Endothelial cell of umbilical vein (primary cell): ENCODE measurements at regions of chr3 and their contacts with region 1.

Region 1: DNA sequence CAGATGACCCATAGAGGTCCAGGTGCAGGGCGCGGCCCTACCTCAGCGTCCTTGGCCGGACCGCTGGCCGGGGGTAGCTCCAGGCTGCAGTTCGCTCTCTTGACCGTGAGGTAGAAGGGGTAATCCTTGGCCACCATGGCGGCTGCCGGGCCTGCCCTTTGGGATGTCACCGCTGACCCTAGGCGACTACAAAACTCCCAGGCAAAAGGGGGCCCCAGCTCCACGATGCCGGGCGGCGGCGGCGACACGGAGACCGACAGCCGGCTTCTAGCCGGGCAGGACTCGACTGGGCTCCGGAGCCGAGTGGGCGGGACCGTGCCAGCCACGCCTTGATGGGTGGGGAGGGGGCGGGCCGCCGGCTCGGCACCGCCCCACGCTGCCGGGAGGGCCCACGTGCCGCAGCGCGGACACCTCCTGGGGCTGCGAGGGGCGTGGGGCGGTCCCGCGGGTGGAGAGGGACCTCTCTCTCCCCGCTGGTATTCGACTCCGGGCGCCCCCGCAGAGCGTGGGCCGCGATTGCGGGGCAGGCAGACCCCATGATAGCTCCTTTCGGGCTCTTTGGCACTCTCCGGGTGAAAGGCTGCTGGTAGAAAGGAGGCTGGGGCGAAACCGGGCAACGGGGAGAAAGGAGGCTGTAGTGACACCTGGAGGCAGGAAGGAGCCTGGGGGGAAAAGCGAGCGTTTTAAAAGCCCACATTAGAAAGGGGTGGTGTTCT is at the start of gene ARHGEF3:
- DNase-seq: peak; percentile 90
- H3K4me3 ChIP-seq: peak within 1 kb of the TSS; percentile 56 to 82 (median 68)
- H3K27ac ChIP-seq: peak within 1 kb of the TSS; percentile 7
- H3K4me1 ChIP-seq: peaks cover 27% of the 10 kb centered on the region
- H3K27me3 ChIP-seq: no peaks in the 10 kb centered on the region
- CTCF ChIP-seq: peak; percentile 32 to 54
- POLR2A ChIP-seq: peak; percentile 90
- total RNA-seq, gene ARHGEF3: 11.5 and 16.3 TPM in 2 replicates

Region 2: GRCh38 chr3:56702490-56703315 is 99.1 kb before region 1 on chr3:
- CTCF ChIA-PET with region 1: interaction called, 249 read pairs
- POLR2A ChIA-PET with region 1: no interaction called
- dilution Hi-C with region 1: no loop called
- intact Hi-C with region 1: loop called (anchors 1 kb)
- DNase-seq: peak; percentile 66
- H3K4me3 ChIP-seq: no peak overlapping the region
- H3K27ac ChIP-seq: no peak overlapping the region
- H3K4me1 ChIP-seq: no peaks in the 10 kb centered on the region
- H3K27me3 ChIP-seq: no peaks in the 10 kb centered on the region
- CTCF ChIP-seq: peak; percentile 56 to 61
- POLR2A ChIP-seq: no peak

Region 3: DNA sequence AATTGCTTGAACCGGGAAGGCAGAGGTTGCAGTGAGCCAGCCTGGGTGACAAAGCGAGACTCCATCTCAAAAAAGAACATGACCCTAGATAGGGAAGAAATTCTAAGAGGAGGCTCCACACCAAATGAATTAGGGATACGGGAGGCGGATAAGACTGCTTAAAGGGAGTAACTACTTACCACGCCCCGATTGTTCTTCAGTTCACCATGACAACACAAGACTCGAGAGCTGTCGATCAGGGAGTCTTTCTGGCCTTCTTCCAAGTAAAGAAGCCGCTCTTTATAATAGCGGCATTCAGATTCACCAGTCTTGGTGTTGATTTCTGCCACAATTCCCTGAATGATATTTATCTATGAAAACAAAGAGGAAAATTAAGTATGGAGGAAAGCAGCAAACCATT is 64.8 kb before region 1 on chr3:
- CTCF ChIA-PET with region 1: interaction called, 10 read pairs
- POLR2A ChIA-PET with region 1: no interaction called
- dilution Hi-C with region 1: no loop called
- intact Hi-C with region 1: no loop called
- DNase-seq: no peak
- H3K4me3 ChIP-seq: no peak overlapping the region
- H3K27ac ChIP-seq: no peak overlapping the region
- H3K4me1 ChIP-seq: no peaks in the 10 kb centered on the region
- H3K27me3 ChIP-seq: no peaks in the 10 kb centered on the region
- CTCF ChIP-seq: no peak
- POLR2A ChIP-seq: no peak

Region 4: DNA sequence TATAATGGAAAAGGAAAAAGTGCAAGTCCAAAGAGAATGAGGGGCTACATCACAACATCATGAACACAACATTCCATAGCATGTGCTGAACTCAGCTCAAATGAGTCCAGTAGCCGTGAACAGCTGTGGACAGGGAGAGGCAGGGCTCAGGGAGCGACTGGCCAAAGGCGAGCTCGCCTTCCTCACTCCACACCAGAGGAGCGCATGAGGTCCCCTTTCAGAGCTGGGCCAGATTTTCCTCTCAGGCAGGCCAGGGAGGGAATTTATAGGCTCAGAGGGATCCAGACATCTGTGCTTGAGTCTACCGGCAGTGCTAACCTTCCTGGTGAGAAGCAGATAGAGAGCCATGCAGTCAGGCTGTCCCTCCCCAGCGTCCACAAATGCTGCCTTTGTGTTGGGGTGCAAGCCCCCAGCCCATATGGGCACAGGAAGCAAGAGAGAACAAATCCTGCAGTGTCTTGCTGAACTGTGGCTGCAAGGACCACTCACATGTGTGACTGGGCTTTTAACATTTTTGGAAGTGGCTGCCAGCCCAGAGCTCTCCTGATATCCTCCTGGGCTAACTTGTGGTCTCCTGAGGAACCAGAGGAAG is 32.6 kb before region 1 on chr3:
- CTCF ChIA-PET with region 1: interaction called, 15 read pairs
- POLR2A ChIA-PET with region 1: no interaction called
- dilution Hi-C with region 1: no loop called
- intact Hi-C with region 1: no loop called
- DNase-seq: no peak
- H3K4me3 ChIP-seq: no peak overlapping the region
- H3K27ac ChIP-seq: no peak overlapping the region
- H3K4me1 ChIP-seq: no peaks in the 10 kb centered on the region
- H3K27me3 ChIP-seq: no peaks in the 10 kb centered on the region
- CTCF ChIP-seq: no peak
- POLR2A ChIP-seq: no peak

Region 5: DNA sequence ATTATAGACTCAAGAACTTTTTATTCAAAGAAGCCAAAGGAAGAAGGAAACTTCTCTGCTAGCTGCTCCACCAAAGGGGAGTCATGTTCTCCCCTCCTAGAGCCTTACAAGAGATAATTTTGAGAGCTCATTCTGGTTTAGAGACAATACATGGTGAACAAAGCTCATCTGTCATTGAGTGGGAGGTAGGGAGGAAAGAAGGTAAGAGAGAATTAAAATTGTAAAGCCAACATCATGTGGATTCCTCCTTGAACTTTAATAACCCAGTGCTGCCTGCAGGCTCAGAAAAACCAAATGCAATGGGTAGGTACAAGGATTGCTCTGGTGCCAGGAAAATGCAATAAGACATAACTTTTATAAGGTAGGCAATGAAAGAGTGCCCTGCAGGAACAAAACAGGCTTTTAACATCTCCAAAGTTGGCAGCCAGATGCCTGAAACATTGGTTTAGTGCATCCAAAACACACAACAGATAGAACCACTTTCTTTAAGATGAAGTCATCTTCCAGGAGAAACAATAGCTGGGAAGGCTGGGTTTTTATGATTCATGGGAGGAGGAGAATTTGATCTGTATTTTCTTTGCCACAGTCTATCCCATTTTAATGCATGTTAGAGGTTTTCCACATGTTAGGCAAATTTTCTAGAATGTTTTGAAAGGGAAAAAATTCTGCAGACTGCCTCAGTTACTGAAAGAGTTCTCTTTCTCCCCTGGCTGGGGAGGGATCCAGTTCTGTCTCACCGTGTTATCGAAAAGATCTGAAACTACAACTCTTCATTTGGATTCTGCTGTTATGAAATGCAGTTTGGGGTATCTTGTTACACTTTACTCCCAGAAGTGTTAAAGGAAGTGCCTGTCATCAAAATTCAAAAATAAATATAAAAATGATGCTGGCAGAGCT is 11.2 kb after region 1 on chr3:
- CTCF ChIA-PET with region 1: interaction called, 46 read pairs
- POLR2A ChIA-PET with region 1: interaction called, 4 read pairs
- dilution Hi-C with region 1: no loop called
- intact Hi-C with region 1: no loop called
- DNase-seq: peak; percentile 71
- H3K4me3 ChIP-seq: peak overlapping the region in 1 of 3 experiments; percentile 33
- H3K27ac ChIP-seq: peak overlapping the region; percentile 65
- H3K4me1 ChIP-seq: peaks cover 14% of the 10 kb centered on the region
- H3K27me3 ChIP-seq: no peaks in the 10 kb centered on the region
- CTCF ChIP-seq: no peak
- POLR2A ChIP-seq: no peak

Region 6: GRCh38 chr3:56862352-56863074 is 60.7 kb after region 1 on chr3:
- CTCF ChIA-PET with region 1: interaction called, 10 read pairs
- POLR2A ChIA-PET with region 1: no interaction called
- dilution Hi-C with region 1: no loop called
- intact Hi-C with region 1: no loop called
- DNase-seq: peak; percentile 76
- H3K4me3 ChIP-seq: no peak overlapping the region
- H3K27ac ChIP-seq: no peak overlapping the region
- H3K4me1 ChIP-seq: peaks cover 7% of the 10 kb centered on the region
- H3K27me3 ChIP-seq: no peaks in the 10 kb centered on the region
- CTCF ChIP-seq: no peak
- POLR2A ChIP-seq: no peak

Region 7: DNA sequence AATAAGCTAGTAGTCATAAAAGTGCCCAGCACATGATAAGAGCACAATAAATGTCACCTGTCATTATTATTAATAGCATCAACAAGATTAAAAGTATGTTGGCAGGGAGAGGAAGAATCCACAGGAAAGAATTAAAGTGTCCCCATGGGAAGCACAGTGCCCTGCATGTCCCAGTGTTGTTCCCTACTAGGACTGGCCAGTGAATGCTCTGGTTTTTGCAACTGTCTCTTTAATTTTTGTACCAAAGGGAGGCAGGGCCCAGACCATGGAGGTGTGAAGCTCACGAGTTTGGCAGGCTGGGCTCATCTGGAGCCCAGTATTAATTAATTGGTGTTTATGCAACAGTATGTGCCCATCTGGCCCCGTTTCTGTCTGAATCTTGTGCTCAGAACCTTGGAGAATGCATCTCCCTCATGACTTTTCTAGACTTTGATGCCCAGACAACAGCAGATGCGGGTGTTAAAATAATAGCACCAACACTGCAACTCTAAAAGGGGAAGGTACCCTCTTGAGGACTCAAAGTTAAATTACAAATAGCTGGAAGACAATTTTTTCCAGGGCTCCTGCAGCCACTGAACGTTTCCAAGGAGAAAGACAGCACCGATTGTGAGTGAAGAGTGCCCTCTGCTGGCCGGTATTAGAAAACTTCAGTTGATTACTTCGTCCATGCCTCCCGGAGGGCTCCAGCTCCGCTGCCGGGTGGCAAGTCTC is 186.8 kb after region 1 on chr3:
- CTCF ChIA-PET with region 1: interaction called, 223 read pairs
- POLR2A ChIA-PET with region 1: interaction called, 6 read pairs
- dilution Hi-C with region 1: no loop called
- intact Hi-C with region 1: loop called (anchors 1 kb)
- DNase-seq: peak; percentile 87
- H3K4me3 ChIP-seq: no peak overlapping the region
- H3K27ac ChIP-seq: no peak overlapping the region
- H3K4me1 ChIP-seq: no peaks in the 10 kb centered on the region
- H3K27me3 ChIP-seq: peaks cover 0 to 2% of the 10 kb centered on the region in 2 experiments
- CTCF ChIP-seq: peak; percentile 61 to 62
- POLR2A ChIP-seq: no peak

Region 8: DNA sequence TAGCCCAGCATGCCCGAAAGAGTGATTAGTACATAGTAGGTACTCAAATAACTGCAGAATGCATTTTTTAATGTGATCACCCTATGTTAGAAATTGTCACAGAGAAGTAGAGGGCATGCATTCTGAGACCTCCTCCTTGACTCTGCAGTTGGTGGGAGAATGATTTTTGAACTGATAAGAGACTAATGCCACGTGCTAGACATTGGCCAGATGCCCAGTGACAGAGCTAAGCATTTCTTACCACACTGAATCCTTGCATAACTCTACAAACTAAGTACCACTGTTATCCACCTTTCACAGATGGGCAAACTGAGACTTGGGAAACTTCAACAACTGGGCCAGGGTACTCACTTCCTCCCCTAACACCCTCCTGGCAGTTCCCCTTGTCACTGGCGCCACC is 225.1 kb after region 1 on chr3:
- CTCF ChIA-PET with region 1: no interaction called
- POLR2A ChIA-PET with region 1: no interaction called
- dilution Hi-C with region 1: no loop called
- intact Hi-C with region 1: no loop called
- DNase-seq: peak; percentile 17
- H3K4me3 ChIP-seq: no peak overlapping the region
- H3K27ac ChIP-seq: no peak overlapping the region
- H3K4me1 ChIP-seq: no peaks in the 10 kb centered on the region
- H3K27me3 ChIP-seq: peaks cover 0 to 3% of the 10 kb centered on the region in 2 experiments
- CTCF ChIP-seq: no peak
- POLR2A ChIP-seq: no peak

Region 9: DNA sequence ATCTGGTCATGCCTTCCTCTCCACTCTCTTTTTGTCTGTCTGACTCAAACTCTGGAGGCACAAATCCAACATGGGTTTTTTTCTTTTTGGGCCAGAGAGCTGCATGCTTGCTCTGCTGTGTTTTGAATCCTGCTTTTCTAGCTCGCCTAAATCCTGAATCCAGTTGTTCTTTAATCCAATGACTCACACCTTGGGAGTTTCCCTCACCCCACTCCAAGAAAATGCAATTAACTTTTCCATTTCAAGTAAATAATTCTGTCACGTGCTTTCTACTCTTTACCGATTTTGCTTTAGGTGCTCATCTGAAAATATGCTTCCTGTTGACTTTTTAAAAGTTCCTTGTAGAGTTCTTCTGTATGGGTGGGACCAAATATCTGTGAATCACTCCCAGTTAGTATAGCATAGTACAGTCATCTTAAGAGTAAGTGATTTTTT is 1001.8 kb after region 1 on chr3:
- CTCF ChIA-PET with region 1: no interaction called
- POLR2A ChIA-PET with region 1: no interaction called
- dilution Hi-C with region 1: no loop called
- intact Hi-C with region 1: no loop called
- DNase-seq: peak; percentile 94
- H3K4me3 ChIP-seq: peak overlapping the region in 1 of 3 experiments; percentile 34
- H3K27ac ChIP-seq: peak overlapping the region; percentile 52
- H3K4me1 ChIP-seq: peaks cover 27% of the 10 kb centered on the region
- H3K27me3 ChIP-seq: no peaks in the 10 kb centered on the region
- CTCF ChIP-seq: no peak
- POLR2A ChIP-seq: no peak